ENCODE measurements at regions of chr3 and their contacts with region 1.

Region 1: GRCh38 chr3:42118762-42119361 is 27.7 kb downstream of the TRAK1 start:
- DNase-seq: no peak
- H3K4me3 ChIP-seq: no peak overlapping the region
- H3K27ac ChIP-seq: no peak overlapping the region
- H3K4me1 ChIP-seq: peaks cover 5 to 23% of the 10 kb centered on the region in 2 donors
- H3K27me3 ChIP-seq: no peaks in the 10 kb centered on the region
- CTCF ChIP-seq: peak in 1 of 6 experiments; percentile 4
- POLR2A ChIP-seq: no peak

Region 2: DNA sequence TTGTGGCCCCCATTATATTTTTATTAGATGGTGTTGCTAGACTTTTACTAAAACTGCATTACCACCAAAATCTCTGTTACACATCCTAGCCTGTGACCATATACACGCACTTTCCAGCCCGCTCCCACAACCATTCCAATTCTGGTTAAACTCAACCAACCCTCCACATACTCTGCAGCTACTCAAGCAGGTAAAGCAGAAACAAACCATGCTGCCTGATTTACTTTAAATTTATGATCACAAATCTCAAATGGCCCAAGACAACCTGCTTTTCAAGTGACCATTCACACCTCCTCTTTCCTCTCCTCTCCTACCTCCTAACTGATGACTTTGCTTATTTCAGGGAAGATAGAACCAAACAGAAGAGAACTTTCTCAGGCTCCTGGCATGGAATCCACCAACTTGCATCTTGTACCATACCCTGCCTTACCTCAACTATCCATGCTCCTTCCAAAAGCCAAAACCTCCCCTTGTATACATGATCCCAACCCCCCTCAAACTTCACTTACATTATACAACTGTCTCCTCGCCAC is 175.5 kb before region 1 on chr3:
- intact Hi-C with region 1: no loop called
- DNase-seq: no peak
- H3K4me3 ChIP-seq: no peak overlapping the region
- H3K27ac ChIP-seq: no peak overlapping the region
- H3K4me1 ChIP-seq: no peaks in the 10 kb centered on the region
- H3K27me3 ChIP-seq: no peaks in the 10 kb centered on the region
- CTCF ChIP-seq: no peak
- POLR2A ChIP-seq: no peak

Region 3: DNA sequence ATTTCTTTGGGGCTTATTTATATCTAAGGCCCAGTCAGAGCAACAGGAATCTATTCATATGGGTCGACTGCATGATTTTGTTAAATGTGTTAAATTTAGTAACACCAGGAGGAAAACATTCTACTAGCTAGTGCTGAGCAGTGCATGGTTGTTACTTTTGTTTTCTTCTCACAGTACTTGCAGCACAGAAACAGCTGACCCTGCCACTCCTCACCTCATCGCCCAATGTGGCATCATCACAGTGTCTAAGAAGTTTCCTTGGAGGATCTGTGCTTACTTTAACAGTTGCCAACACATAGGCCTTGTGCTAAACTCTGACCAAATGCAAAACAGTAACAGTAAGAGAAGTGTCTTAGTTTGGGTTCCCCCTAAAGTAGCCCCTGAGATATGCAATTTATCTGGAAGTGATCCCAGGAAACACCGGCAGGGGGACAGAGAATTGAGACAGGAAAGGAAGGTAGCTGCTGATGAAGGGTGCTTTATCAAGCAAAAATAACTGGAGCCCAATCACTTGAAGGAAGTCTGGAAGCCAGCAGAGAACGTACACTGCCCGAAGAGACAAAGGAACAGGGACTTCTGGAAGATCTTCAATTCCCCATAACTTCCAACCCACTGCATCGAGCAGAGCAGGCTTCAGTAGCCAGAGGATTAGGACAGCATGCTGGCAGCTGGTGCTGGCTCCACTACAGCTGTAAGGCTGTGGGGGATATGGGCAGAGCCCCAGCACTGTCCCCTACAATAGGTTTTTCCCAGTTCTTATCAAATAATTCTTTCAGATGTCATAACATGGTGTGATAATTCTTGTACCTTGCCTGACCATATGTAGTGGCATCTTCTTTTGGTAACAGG is 120.9 kb before region 1 on chr3:
- intact Hi-C with region 1: no loop called
- DNase-seq: no peak
- H3K4me3 ChIP-seq: no peak overlapping the region
- H3K27ac ChIP-seq: no peak overlapping the region
- H3K4me1 ChIP-seq: no peaks in the 10 kb centered on the region
- H3K27me3 ChIP-seq: no peaks in the 10 kb centered on the region
- CTCF ChIP-seq: peak; percentile 6 to 33 (median 27)
- POLR2A ChIP-seq: no peak

Region 4: GRCh38 chr3:42184651-42185443 is 66.0 kb after region 1 on chr3:
- intact Hi-C with region 1: loop called (anchors 5 to 10 kb)
- DNase-seq: peak in 2 of 7 donors; percentile 34 to 72
- H3K4me3 ChIP-seq: no peak overlapping the region
- H3K27ac ChIP-seq: no peak overlapping the region
- H3K4me1 ChIP-seq: peaks cover 0 to under 1% of the 10 kb centered on the region in 2 donors
- H3K27me3 ChIP-seq: no peaks in the 10 kb centered on the region
- CTCF ChIP-seq: no peak
- POLR2A ChIP-seq: no peak

Region 5: GRCh38 chr3:42190701-42191462 is 72.0 kb after region 1 on chr3:
- intact Hi-C with region 1: loop called (anchors 5 to 10 kb)
- DNase-seq: peak; percentile 59 to 89 (median 76)
- H3K4me3 ChIP-seq: no peak overlapping the region
- H3K27ac ChIP-seq: no peak overlapping the region
- H3K4me1 ChIP-seq: no peaks in the 10 kb centered on the region
- H3K27me3 ChIP-seq: no peaks in the 10 kb centered on the region
- CTCF ChIP-seq: peak; percentile 74 to 88 (median 79)
- POLR2A ChIP-seq: no peak

Measured in adrenal gland (tissue), 19 donors.